ENCODE measurements at regions of chr2 and their contacts with region 1.

Region 1: GRCh38 chr2:197515739-197516392 is at the start of gene MOB4:
- DNase-seq: peak; percentile 94 to 97 (median 96)
- H3K4me3 ChIP-seq: peak within 1 kb of the TSS; percentile 81
- H3K27ac ChIP-seq: peak within 1 kb of the TSS; percentile 84 to 99
- H3K4me1 ChIP-seq: peaks cover 5% of the 10 kb centered on the region
- H3K27me3 ChIP-seq: no peaks in the 10 kb centered on the region
- CTCF ChIP-seq: peak in 2 of 3 donors; percentile 16 to 36
- EP300 ChIP-seq: no peak
- POLR2A ChIP-seq: peak; percentile 80
- total RNA-seq, gene MOB4: 18.7 to 36.2 (median 25.5) TPM

Region 2: GRCh38 chr2:197705121-197705911 is 189.4 kb after region 1 on chr2 and contains the start of gene MARS2:
- intact Hi-C with region 1: loop called in 1 of 4 experiments (anchors 10 kb)
- DNase-seq: peak; percentile 90 to 96 (median 94)
- H3K4me3 ChIP-seq: peak within 1 kb of the TSS; percentile 86
- H3K27ac ChIP-seq: peak within 1 kb of the TSS; percentile 50 to 56
- H3K4me1 ChIP-seq: peaks cover 9% of the 10 kb centered on the region
- H3K27me3 ChIP-seq: peaks cover 2% of the 10 kb centered on the region
- CTCF ChIP-seq: no peak
- EP300 ChIP-seq: no peak
- POLR2A ChIP-seq: no peak
- total RNA-seq, gene MARS2: 3.2 to 7.7 (median 5.0) TPM